PC-9 (cell line): ENCODE measurements at regions of chr5 and their contacts with region 1.

Region 1: DNA sequence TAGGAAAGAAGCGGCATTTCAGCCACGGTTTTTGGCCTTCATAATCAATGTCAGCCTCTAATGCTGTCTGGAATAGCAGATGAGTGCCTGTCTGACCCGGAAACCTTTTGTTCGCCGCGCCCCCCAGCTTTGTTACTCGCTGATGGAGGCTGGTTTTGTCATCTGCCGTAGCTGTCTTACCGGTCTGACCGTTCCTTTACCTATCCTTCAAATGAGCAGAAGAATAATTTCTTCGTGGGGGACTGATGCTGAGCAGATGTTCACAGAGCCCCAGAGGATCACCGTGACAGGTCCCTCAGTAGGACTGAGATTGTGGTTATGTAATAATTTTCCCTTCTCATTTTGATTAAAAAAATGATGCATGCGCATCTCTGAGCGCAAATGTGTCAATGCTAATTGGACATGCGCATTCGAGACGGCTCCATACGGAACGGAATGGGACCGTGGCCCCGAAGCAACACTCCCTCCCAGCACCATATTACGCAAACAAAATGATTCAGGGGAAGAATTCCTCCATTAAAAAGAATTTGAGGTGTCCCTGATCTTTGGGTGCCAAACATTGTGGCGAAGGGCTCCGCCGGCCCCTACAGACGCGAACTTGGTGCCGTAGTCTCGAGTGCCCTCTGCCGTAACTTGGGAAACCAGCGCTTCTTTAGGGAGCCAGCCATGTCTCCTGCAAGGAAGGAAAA is 27.6 kb downstream of the TLX3 start:
- DNase-seq: peak; percentile 46 to 62
- H3K4me3 ChIP-seq: peak overlapping the region; percentile 48
- H3K27ac ChIP-seq: no peak overlapping the region
- H3K4me1 ChIP-seq: 0 out of 2 replicates have a peak, but pooled peaks cover 6% of the 10 kb centered on the region
- H3K27me3 ChIP-seq: no peaks in the 10 kb centered on the region
- CTCF ChIP-seq: peak; percentile 78

Region 2: DNA sequence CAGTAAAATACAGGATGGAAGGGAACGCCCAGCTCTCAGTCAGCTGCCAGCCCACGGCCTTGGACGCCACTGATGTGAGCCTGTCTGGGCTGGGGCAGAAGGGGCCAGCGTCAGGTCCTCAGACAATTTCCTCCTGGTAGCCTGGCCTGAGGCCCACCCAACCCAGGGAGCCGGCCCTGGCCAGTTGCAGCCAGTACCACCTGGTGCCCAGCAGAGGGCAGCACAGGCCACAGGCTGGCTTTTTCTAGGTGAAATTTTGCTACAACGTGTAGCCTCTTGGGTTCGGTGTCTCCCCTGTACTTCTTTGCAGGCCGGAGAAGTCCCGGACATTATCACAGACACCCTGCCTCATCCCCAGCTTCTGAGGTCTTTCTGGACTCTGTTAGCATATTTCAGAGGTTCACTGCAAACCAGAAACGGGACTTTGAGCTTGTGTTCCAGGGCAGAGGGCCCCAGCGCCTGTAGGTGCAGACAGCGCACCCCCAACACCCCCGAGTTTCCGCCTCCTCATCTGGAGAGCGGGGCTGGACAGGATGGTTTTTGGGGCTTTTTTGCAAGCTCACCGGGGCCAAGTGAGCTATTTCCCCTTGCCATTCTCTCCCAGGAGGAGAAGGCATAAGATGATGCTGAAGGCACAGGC is 901.6 kb before region 1 on chr5:
- CTCF ChIA-PET with region 1: no interaction called
- POLR2A ChIA-PET with region 1: no interaction called
- intact Hi-C with region 1: loop called (anchors 10 kb)
- DNase-seq: peak; percentile 39 to 45
- H3K4me3 ChIP-seq: no peak overlapping the region
- H3K27ac ChIP-seq: no peak overlapping the region
- H3K4me1 ChIP-seq: no peaks in the 10 kb centered on the region
- H3K27me3 ChIP-seq: peaks cover 5% of the 10 kb centered on the region; the same call in 1 of the 2 replicates
- CTCF ChIP-seq: peak; percentile 95

Region 3: GRCh38 chr5:170747851-170748250 is 588.8 kb before region 1 on chr5:
- CTCF ChIA-PET with region 1: interaction called, 6 read pairs
- POLR2A ChIA-PET with region 1: no interaction called
- intact Hi-C with region 1: loop called (anchors 1 kb)
- DNase-seq: no peak
- H3K4me3 ChIP-seq: no peak overlapping the region
- H3K27ac ChIP-seq: peak overlapping the region; percentile 96
- H3K4me1 ChIP-seq: peaks cover 78% of the 10 kb centered on the region
- H3K27me3 ChIP-seq: no peaks in the 10 kb centered on the region
- CTCF ChIP-seq: peak; percentile 58

Region 4: GRCh38 chr5:170809551-170809950 is 527.1 kb before region 1 on chr5:
- CTCF ChIA-PET with region 1: no interaction called
- POLR2A ChIA-PET with region 1: no interaction called
- intact Hi-C with region 1: loop called (anchors 2 kb)
- DNase-seq: peak in 1 of 2 experiments; percentile 49
- H3K4me3 ChIP-seq: no peak overlapping the region
- H3K27ac ChIP-seq: no peak overlapping the region
- H3K4me1 ChIP-seq: no peaks in the 10 kb centered on the region
- H3K27me3 ChIP-seq: no peaks in the 10 kb centered on the region
- CTCF ChIP-seq: peak; percentile 76

Region 5: GRCh38 chr5:171152382-171152781 is 184.3 kb before region 1 on chr5:
- CTCF ChIA-PET with region 1: no interaction called
- POLR2A ChIA-PET with region 1: no interaction called
- intact Hi-C with region 1: no loop called
- DNase-seq: no peak
- H3K4me3 ChIP-seq: no peak overlapping the region
- H3K27ac ChIP-seq: no peak overlapping the region
- H3K4me1 ChIP-seq: no peaks in the 10 kb centered on the region
- H3K27me3 ChIP-seq: no peaks in the 10 kb centered on the region
- CTCF ChIP-seq: no peak

Region 6: DNA sequence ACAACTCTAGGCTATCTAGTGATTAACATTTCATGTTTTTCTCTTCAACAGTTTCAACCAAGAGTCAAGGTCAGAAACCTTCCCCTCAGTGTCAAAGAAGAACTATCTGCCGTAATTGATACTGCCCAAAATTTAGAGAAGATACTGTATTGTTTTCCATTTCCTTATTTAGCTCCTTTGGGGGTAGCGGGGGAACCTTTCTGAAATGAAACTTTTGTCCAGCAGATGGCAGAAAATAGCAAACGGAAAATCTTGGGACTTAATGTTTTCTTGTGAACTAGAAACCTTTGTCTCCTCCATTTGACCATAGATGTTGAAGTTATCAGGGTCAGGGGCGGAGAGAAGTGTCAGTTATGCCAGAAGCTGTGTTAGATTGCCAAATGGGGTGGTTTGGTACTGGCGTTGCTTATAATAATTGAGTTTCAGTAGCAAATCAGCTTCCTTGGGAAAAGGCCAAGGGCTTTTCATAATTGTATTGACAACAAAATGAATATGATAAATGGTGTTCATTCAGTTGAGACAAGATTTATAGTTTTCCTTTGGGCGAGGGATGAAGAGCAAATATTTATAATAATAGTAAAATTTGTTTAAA is 129.3 kb before region 1 on chr5:
- CTCF ChIA-PET with region 1: interaction called, 9 read pairs
- POLR2A ChIA-PET with region 1: interaction called, 4 read pairs
- intact Hi-C with region 1: loop called (anchors 1 kb)
- DNase-seq: peak in 1 of 2 experiments; percentile 33
- H3K4me3 ChIP-seq: no peak overlapping the region
- H3K27ac ChIP-seq: no peak overlapping the region
- H3K4me1 ChIP-seq: no peaks in the 10 kb centered on the region
- H3K27me3 ChIP-seq: no peaks in the 10 kb centered on the region
- CTCF ChIP-seq: peak; percentile 70